Cardiac septum (tissue), 1 donor: ENCODE measurements at regions of chr7 and their contacts with region 1.

Region 1: GRCh38 chr7:112484671-112485097 is 3.9 kb downstream of the LSMEM1 start:
- DNase-seq: no peak

Region 2: GRCh38 chr7:112449902-112450806 is 34.5 kb before region 1 on chr7 and contains the start of gene IFRD1:
- intact Hi-C with region 1: loop called (anchors 5 kb)
- DNase-seq: peak; percentile 100
- total RNA-seq, gene IFRD1: 51.2 TPM

Region 3: DNA sequence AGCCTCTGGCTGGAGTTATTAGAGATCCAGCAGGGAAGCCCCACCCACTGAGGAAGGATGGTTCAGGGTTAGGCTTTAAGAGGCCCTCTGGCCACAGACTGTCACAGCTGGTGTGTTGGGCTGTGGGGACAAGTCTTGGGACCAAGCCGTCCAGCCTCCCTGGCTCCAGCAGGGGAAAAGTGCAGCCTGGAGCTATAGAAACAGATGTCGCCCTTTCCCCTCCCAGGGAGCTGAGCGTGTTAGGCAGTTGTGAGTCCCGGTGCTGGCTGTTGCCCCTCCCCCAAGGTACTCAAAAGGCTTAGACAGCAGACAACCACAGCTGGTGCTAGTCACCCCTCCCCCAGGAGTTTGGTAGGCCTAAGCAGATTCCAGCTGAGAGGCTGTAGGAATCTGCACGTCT is 162.1 kb after region 1 on chr7:
- intact Hi-C with region 1: no loop called
- DNase-seq: no peak

Region 4: DNA sequence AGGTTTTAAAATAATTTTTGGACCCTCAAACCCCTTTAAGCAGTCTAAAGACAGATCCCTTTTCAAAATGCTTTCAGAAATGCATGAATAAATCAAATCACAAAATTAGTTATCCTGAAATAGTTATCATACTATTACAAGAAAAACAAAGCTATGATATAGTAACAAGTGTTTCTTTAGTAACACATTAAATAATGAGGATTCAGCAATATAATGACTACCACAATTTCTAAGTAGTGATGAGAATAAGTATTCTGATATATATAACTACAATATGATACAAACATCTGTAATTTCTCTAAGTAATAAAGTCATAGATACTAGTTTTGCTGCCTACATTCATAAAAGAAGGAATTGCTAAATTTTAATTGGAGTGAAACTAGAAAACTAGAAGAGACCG is 358.5 kb after region 1 on chr7:
- intact Hi-C with region 1: no loop called
- DNase-seq: no peak